Transverse colon (tissue), 4 donors: ENCODE measurements at regions of chr2 and their contacts with region 1.

Region 1: GRCh38 chr2:152335010-152335725 is at the start of gene FMNL2:
- DNase-seq: peak; percentile 88
- H3K4me3 ChIP-seq: peak within 1 kb of the TSS; percentile 85 to 100 (median 88)
- H3K27ac ChIP-seq: peak within 1 kb of the TSS; percentile 86 to 94 (median 92)
- H3K4me1 ChIP-seq: peaks cover 4 to 24% (median 6%) of the 10 kb centered on the region in 4 donors
- H3K27me3 ChIP-seq: no peaks in the 10 kb centered on the region
- CTCF ChIP-seq: peak in 2 of 5 experiments; percentile 5 to 8
- EP300 ChIP-seq: no peak
- POLR2A ChIP-seq: peak; percentile 66
- total RNA-seq, gene FMNL2: 9.2 to 31.4 (median 23.9) TPM

Region 2: GRCh38 chr2:152175458-152176325 is 159.5 kb before region 1 on chr2 and contains the start of gene STAM2:
- in situ Hi-C with region 1: loop called in 2 of 4 experiments (anchors 25 kb)
- intact Hi-C with region 1: no loop called
- DNase-seq: peak; percentile 94
- H3K4me3 ChIP-seq: peak within 1 kb of the TSS; percentile 55 to 90 (median 86)
- H3K27ac ChIP-seq: peak within 1 kb of the TSS; percentile 95 to 98 (median 96)
- H3K4me1 ChIP-seq: peaks cover 16 to 41% (median 39%) of the 10 kb centered on the region in 4 donors
- H3K27me3 ChIP-seq: no peaks in the 10 kb centered on the region
- CTCF ChIP-seq: peak; percentile 93 to 99 (median 96)
- EP300 ChIP-seq: no peak
- POLR2A ChIP-seq: peak; percentile 90
- total RNA-seq, gene STAM2: 17.1 to 57.2 (median 38.1) TPM

Region 3: DNA sequence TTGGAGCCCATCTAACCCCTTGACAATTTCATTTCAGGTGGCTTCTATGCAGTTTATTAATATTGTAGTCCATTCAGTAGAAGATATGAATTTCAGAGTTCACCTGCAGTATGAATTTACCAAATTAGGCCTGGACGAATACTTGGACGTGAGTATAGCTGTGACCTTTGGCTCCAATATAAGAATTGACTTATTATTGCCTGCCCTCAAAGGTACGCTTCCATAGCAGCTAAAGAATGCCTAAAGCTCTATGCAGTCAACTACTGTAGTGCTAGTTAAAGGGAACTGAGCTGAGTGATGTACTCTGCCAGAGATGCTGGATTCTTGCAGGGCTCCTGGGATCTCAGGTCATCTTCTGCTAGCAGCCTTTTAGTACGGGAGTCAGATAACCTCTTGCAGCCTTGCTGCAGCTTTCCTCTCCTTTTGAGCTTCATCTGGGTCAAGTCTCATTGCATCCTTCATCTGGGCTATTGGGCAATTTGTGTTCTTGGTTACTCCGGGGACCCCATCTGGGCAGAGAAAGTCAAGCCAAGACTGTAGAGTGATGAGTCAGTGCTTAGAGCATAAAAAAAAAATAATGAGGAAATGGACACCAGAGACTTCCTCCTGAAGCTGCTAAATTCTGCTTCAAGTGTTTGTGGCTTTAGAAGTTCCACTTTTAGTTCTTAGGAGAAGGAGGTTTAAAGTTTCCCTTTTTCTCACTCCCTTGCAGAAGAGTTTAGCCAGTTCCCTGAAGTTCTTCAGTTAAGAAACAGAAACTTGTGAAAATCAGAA is 276.5 kb after region 1 on chr2:
- in situ Hi-C with region 1: loop called in 1 of 4 experiments (anchors 25 kb)
- intact Hi-C with region 1: no loop called
- DNase-seq: peak; percentile 15
- H3K4me3 ChIP-seq: no peak overlapping the region
- H3K27ac ChIP-seq: peak overlapping the region; percentile 52 to 59 (median 54)
- H3K4me1 ChIP-seq: peaks cover 0 to 13% (median 10%) of the 10 kb centered on the region in 4 donors
- H3K27me3 ChIP-seq: no peaks in the 10 kb centered on the region
- CTCF ChIP-seq: no peak
- EP300 ChIP-seq: no peak
- POLR2A ChIP-seq: no peak

Region 4: DNA sequence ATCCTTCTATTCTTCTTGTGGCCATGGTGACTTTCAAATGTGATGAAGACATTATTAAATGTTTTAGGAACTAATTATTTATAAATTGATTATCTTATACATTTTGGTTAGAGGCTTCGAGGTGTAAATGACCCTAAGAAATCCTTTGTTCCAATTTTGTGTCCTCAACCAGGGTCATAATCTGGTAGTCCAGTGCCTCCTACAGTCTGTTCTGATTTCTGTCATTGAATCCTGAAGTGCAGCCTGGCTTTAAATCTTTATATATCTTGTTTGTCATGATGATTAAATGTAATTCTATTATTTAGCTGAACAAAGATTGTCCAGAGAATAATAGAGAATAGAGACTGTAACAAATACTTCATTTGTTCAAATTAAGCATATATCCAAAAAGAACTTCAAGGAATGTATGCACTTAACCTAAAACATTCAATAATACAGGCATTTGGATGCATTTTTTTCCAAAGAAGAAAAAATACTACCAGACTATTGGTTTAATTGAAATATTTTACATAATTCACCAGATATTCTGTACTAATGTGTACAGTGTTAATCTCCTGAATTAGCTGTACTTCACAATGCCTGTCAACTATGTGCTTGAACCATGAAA is 292.3 kb after region 1 on chr2:
- in situ Hi-C with region 1: loop called in 3 of 4 experiments (anchors 10 to 25 kb)
- intact Hi-C with region 1: loop called (anchors 10 kb)
- DNase-seq: no peak
- H3K4me3 ChIP-seq: no peak overlapping the region
- H3K27ac ChIP-seq: no peak overlapping the region
- H3K4me1 ChIP-seq: no peaks in the 10 kb centered on the region
- H3K27me3 ChIP-seq: no peaks in the 10 kb centered on the region
- CTCF ChIP-seq: peak; percentile 45 to 60 (median 57)
- EP300 ChIP-seq: no peak
- POLR2A ChIP-seq: no peak